ENCODE measurements at regions of chr19 and their contacts with region 1.

Region 1: GRCh38 chr19:30014770-30015169 is 72.7 kb downstream of the URI1 start:
- DNase-seq: no peak
- H3K4me3 ChIP-seq: no peak overlapping the region
- H3K27ac ChIP-seq: no peak overlapping the region
- H3K4me1 ChIP-seq: no peaks in the 10 kb centered on the region
- H3K27me3 ChIP-seq: no peaks in the 10 kb centered on the region
- CTCF ChIP-seq: no peak
- POLR2A ChIP-seq: no peak

Region 2: GRCh38 chr19:29966588-29967249 is 48.1 kb before region 1 on chr19:
- CTCF ChIA-PET with region 1: no interaction called
- POLR2A ChIA-PET with region 1: no interaction called
- dilution Hi-C with region 1: no loop called
- intact Hi-C with region 1: no loop called
- DNase-seq: peak; percentile 14
- H3K4me3 ChIP-seq: no peak overlapping the region
- H3K27ac ChIP-seq: no peak overlapping the region
- H3K4me1 ChIP-seq: no peaks in the 10 kb centered on the region
- H3K27me3 ChIP-seq: no peaks in the 10 kb centered on the region
- CTCF ChIP-seq: no peak
- POLR2A ChIP-seq: no peak

Region 3: DNA sequence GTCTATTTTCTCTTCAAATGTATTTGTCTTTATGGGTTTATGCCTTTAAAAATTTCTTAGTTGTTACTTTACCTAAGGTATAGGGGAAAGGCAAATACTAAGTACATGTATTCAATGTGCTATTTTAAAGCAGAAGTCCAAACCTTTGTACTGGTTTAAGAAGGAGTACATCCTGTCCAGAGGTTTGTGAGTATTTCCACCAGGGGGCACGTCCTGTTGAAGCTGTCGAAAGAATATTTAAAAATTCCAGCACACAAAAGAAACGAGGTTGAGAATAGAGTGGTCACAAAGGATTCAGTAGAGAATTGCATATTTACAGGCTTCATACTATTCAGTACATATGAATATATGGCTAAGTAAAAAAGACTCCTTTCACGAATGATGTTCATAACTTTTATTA is 13.0 kb before region 1 on chr19:
- CTCF ChIA-PET with region 1: interaction called, 14 read pairs
- POLR2A ChIA-PET with region 1: interaction called, 3 read pairs
- dilution Hi-C with region 1: no loop called
- intact Hi-C with region 1: no loop called
- DNase-seq: peak; percentile 6
- H3K4me3 ChIP-seq: no peak overlapping the region
- H3K27ac ChIP-seq: no peak overlapping the region
- H3K4me1 ChIP-seq: no peaks in the 10 kb centered on the region
- H3K27me3 ChIP-seq: no peaks in the 10 kb centered on the region
- CTCF ChIP-seq: peak in 1 of 2 donors; percentile 10
- POLR2A ChIP-seq: no peak

Measured in endothelial cell of umbilical vein (primary cell).